Mammary epithelial cell (primary cell): ENCODE measurements at regions of chr10 and their contacts with region 1.

Region 1: GRCh38 chr10:38004123-38004522 is 6.4 kb upstream of the ZNF33A start:
- DNase-seq: no peak
- H3K4me3 ChIP-seq: no peak overlapping the region
- H3K27ac ChIP-seq: no peak overlapping the region
- H3K4me1 ChIP-seq: peaks cover 5% of the 10 kb centered on the region
- H3K27me3 ChIP-seq: no peaks in the 10 kb centered on the region
- CTCF ChIP-seq: no peak

Region 2: GRCh38 chr10:38047666-38048065 is 43.5 kb after region 1 on chr10:
- CTCF ChIA-PET with region 1: no interaction called
- dilution Hi-C with region 1: loop called (anchors 5 kb)
- in situ Hi-C with region 1: no loop called
- intact Hi-C with region 1: no loop called
- DNase-seq: no peak
- H3K4me3 ChIP-seq: no peak overlapping the region
- H3K27ac ChIP-seq: no peak overlapping the region
- H3K4me1 ChIP-seq: no peaks in the 10 kb centered on the region
- H3K27me3 ChIP-seq: no peaks in the 10 kb centered on the region
- CTCF ChIP-seq: no peak

Region 3: GRCh38 chr10:38226385-38226784 is 222.3 kb after region 1 on chr10:
- CTCF ChIA-PET with region 1: no interaction called
- dilution Hi-C with region 1: no loop called
- in situ Hi-C with region 1: no loop called
- intact Hi-C with region 1: no loop called
- DNase-seq: no peak
- H3K4me3 ChIP-seq: no peak overlapping the region
- H3K27ac ChIP-seq: no peak overlapping the region
- H3K4me1 ChIP-seq: no peaks in the 10 kb centered on the region
- H3K27me3 ChIP-seq: no peaks in the 10 kb centered on the region
- CTCF ChIP-seq: no peak